MCF 10A (cell line): ENCODE measurements at regions of chr10 and their contacts with region 1.

Region 1: GRCh38 chr10:1048732-1049424 is at the start of gene IDI1:
- DNase-seq: peak; percentile 98
- H3K4me3 Mint-ChIP-seq: peak within 1 kb of the TSS; percentile 88
- H3K27ac Mint-ChIP-seq: peak within 1 kb of the TSS; percentile 99
- H3K4me1 Mint-ChIP-seq: peaks cover 36% of the 10 kb centered on the region
- H3K27me3 Mint-ChIP-seq: no peaks in the 10 kb centered on the region
- CTCF ChIP-seq: no peak
- total RNA-seq, gene IDI1: 22.2 and 25.1 TPM in 2 replicates

Region 2: DNA sequence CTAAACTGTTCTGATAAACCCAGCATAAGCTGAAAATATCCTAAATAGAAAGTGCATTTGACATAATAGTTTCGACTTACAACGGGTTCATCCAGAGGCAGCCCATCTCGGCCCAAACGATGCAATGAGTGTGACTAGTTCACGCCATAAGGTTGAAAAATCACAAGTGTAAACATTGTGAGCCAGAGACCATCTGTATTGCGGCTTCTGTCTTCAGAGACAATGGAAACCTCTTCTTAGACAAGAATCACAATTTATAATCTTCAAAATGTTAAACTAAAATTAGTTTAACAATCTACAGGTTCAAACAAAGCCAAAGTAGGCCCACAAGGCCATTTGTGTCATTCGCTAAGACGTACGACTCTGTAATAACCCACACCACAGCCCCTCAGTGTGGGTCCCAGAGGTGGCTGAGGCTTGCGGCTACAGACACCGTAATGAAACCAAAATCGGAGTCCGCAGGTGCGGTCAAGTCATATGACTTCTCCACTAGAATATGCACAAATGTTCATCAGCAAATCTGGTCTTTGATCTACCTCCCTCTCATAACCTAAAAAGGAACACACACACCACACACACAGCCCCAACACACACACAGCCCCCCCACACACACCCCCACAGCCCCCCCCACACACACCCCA is 441.2 kb before region 1 on chr10:
- CTCF ChIA-PET with region 1: no interaction called
- POLR2A ChIA-PET with region 1: no interaction called
- intact Hi-C with region 1: no loop called
- DNase-seq: no peak
- H3K4me3 Mint-ChIP-seq: no peak overlapping the region
- H3K27ac Mint-ChIP-seq: no peak overlapping the region
- H3K4me1 Mint-ChIP-seq: no peaks in the 10 kb centered on the region
- H3K27me3 Mint-ChIP-seq: peaks cover 29% of the 10 kb centered on the region
- CTCF ChIP-seq: no peak

Region 3: DNA sequence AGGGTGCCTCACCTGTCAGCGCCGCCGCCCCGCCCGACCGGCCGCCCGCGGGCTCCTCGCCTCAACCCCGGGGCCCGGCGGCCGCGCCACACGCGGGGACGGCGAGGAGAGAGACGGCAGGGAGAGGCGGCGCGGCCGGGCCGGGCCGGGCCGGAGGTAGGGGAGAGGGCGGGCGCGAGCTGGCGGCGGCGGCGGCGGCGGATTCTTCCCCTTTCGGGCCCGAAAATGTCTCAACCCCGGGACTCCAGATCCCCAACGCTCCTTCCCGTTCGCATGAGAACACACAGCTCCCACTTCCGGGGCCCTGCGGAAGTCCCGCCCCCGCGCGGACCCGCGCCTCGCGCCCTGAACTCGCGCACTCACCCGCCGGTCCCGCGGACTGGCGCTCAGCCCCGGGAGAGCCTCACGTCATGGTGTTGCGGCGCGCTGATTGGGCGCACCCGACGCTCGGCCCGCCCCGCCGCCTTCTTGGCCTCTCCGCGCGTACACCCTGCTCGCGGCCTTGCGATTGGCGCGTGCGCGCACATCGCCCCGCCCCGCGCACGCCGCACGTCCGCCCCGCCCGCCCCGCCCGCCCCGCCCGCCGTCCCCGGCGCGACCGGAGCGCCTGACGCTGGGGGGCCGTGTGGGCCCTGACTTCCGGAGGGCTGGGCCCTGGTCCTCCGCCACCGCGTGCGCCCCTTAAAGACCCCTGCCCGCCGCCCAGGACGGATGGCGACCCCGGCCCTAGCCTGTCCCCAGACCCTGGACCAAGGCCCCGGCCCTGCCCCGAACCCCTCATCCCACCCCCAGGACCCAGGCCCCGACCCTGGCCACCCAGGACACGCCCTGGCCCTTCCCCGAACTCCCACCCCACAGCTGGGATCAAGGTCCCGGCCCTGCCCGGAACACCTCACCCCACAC is 117.2 kb before region 1 on chr10 and contains the start of gene LARP4B:
- CTCF ChIA-PET with region 1: no interaction called
- POLR2A ChIA-PET with region 1: interaction called, 46 read pairs
- intact Hi-C with region 1: loop called (anchors 2 kb)
- DNase-seq: peak; percentile 96
- H3K4me3 Mint-ChIP-seq: peak within 1 kb of the TSS; percentile 87
- H3K27ac Mint-ChIP-seq: peak within 1 kb of the TSS; percentile 92
- H3K4me1 Mint-ChIP-seq: peaks cover 24% of the 10 kb centered on the region
- H3K27me3 Mint-ChIP-seq: no peaks in the 10 kb centered on the region
- CTCF ChIP-seq: no peak
- total RNA-seq, gene LARP4B: 127 and 131 TPM in 2 replicates

Region 4: DNA sequence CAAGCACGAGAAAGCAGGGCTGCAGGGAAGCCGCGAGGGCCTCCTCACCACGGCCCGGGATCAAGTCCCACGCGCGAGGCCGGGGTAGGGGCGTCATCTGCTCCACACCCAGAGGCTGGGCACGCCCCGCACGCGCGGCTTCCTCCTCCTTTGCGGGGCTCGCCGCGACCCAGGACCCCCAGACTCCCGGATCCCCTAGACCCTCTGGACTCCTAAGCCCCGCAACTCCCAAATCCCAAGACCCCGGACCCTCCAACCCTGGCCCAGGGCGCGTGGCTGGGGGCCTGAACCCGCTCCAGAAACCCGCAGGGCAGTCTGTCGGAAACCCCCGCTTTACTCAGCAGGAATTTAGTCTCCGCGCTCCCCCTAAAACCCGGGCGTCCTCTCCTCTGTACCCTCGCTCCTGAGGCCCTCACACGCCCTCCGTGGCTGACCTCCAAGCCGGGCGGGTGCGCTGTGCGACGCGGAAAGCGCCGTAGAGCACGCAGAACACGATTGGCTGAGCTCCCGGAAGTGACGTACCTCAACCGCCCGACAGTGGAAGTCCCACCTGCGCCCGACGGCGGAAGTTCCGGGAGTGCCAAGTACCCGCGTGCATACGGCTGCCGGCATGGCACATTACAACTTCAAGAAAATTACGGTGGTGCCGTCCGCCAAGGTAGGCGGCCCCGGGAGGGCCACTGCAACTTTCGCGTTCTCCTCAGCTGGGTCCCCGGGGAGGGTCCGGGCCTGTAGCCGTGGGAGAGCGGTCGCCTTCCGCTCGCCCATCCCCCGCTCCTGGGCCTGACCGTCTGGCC is 60.8 kb before region 1 on chr10 and contains the start of gene GTPBP4:
- CTCF ChIA-PET with region 1: no interaction called
- POLR2A ChIA-PET with region 1: interaction called, 170 read pairs
- intact Hi-C with region 1: no loop called
- DNase-seq: peak; percentile 95
- H3K4me3 Mint-ChIP-seq: peak within 1 kb of the TSS; percentile 95
- H3K27ac Mint-ChIP-seq: peak within 1 kb of the TSS; percentile 96
- H3K4me1 Mint-ChIP-seq: peaks cover 20% of the 10 kb centered on the region
- H3K27me3 Mint-ChIP-seq: no peaks in the 10 kb centered on the region
- CTCF ChIP-seq: no peak
- total RNA-seq, gene GTPBP4: 138 and 142 TPM in 2 replicates

Region 5: GRCh38 chr10:1036341-1036791 is 12.5 kb before region 1 on chr10:
- CTCF ChIA-PET with region 1: interaction called, 5 read pairs
- POLR2A ChIA-PET with region 1: interaction called, 217 read pairs
- intact Hi-C with region 1: no loop called
- DNase-seq: peak; percentile 90
- H3K4me3 Mint-ChIP-seq: peak overlapping the region; percentile 28
- H3K27ac Mint-ChIP-seq: peak overlapping the region; percentile 89
- H3K4me1 Mint-ChIP-seq: peaks cover 19% of the 10 kb centered on the region
- H3K27me3 Mint-ChIP-seq: no peaks in the 10 kb centered on the region
- CTCF ChIP-seq: no peak

Region 6: GRCh38 chr10:1061930-1062774 is 13.3 kb after region 1 on chr10:
- CTCF ChIA-PET with region 1: interaction called, 5 read pairs
- POLR2A ChIA-PET with region 1: interaction called, 61 read pairs
- intact Hi-C with region 1: no loop called
- DNase-seq: no peak
- H3K4me3 Mint-ChIP-seq: no peak overlapping the region
- H3K27ac Mint-ChIP-seq: no peak overlapping the region
- H3K4me1 Mint-ChIP-seq: peaks cover 18% of the 10 kb centered on the region
- H3K27me3 Mint-ChIP-seq: no peaks in the 10 kb centered on the region
- CTCF ChIP-seq: no peak

Region 7: GRCh38 chr10:1068380-1069361 is 19.8 kb after region 1 on chr10:
- CTCF ChIA-PET with region 1: interaction called, 4 read pairs
- POLR2A ChIA-PET with region 1: interaction called, 61 read pairs
- intact Hi-C with region 1: no loop called
- DNase-seq: no peak
- H3K4me3 Mint-ChIP-seq: no peak overlapping the region
- H3K27ac Mint-ChIP-seq: no peak overlapping the region
- H3K4me1 Mint-ChIP-seq: peaks cover 18% of the 10 kb centered on the region
- H3K27me3 Mint-ChIP-seq: no peaks in the 10 kb centered on the region
- CTCF ChIP-seq: no peak

Region 8: DNA sequence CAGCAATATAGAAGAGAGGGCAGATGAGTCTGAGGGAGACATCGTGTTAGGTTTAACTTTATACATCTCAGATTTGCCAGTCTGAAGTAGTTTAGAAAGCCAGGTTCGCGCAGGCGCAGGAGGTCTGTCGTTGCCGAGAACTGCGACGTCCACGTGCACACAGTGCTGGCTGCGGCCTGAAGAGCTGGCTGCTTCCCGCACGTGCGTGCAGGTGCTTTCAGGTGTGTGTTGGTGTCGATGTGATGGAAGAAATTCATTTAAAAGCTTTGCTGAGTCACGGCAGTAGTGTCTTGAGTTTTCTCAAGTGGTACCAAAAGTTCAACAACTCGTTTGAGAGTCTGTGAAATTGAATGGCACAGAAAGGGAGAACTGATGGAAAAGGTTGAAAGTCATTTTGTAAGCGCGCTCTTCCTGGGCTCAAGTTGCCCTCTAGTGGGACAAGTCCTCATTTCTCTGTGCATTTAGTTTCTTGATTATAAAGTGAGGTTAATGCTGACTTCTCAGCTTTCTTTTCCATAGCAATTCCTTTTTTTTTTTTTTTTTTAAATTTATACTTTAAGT is 25.9 kb after region 1 on chr10:
- CTCF ChIA-PET with region 1: interaction called, 4 read pairs
- POLR2A ChIA-PET with region 1: interaction called, 15 read pairs
- intact Hi-C with region 1: no loop called
- DNase-seq: peak; percentile 18
- H3K4me3 Mint-ChIP-seq: no peak overlapping the region
- H3K27ac Mint-ChIP-seq: no peak overlapping the region
- H3K4me1 Mint-ChIP-seq: peaks cover 6% of the 10 kb centered on the region
- H3K27me3 Mint-ChIP-seq: no peaks in the 10 kb centered on the region
- CTCF ChIP-seq: no peak

Region 9: DNA sequence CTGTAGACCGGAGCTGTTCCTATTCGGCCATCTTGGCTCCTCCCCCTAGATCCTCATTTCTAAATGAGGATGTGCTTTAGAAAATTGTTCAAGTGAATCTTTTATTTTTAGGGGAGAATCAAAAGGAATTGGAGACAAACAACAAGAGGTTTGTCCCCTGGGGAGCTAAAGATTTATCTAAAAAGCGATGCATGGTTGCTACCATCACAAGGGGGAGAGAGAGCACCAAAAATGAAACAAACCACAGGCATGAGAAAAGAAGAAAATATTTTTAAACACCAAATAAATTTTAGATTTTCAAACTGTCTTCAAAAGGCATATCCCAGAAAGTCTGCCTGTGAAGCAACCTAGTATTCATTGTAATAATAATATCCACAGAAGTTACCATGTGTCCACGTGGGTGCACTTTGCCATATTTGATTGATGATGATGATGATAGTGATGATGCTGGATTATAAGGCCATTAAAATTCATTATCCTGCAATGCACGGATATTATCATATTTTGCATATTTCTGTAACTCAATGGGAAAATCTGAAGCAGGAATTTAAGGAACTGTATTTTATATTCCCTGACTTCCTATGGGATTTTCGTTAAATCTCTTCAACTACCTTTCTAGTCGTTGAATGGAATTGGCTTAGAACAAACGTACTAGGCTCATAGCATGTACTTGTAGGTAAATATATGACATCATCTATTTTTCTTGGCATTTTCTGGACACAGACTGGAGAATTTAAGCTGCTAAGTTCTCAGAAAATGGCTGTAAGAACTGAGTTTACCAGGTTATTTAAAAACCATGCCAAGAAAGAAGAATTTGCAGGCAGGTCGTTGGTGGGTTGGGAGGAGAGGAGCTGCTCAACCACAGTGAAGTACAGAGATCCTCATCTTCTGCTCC is 178.9 kb after region 1 on chr10:
- CTCF ChIA-PET with region 1: no interaction called
- POLR2A ChIA-PET with region 1: no interaction called
- intact Hi-C with region 1: no loop called
- DNase-seq: no peak
- H3K4me3 Mint-ChIP-seq: no peak overlapping the region
- H3K27ac Mint-ChIP-seq: no peak overlapping the region
- H3K4me1 Mint-ChIP-seq: no peaks in the 10 kb centered on the region
- H3K27me3 Mint-ChIP-seq: peaks cover 26% of the 10 kb centered on the region
- CTCF ChIP-seq: peak; percentile 24